ENCODE measurements at regions of chr6 and their contacts with region 1.

Region 1: DNA sequence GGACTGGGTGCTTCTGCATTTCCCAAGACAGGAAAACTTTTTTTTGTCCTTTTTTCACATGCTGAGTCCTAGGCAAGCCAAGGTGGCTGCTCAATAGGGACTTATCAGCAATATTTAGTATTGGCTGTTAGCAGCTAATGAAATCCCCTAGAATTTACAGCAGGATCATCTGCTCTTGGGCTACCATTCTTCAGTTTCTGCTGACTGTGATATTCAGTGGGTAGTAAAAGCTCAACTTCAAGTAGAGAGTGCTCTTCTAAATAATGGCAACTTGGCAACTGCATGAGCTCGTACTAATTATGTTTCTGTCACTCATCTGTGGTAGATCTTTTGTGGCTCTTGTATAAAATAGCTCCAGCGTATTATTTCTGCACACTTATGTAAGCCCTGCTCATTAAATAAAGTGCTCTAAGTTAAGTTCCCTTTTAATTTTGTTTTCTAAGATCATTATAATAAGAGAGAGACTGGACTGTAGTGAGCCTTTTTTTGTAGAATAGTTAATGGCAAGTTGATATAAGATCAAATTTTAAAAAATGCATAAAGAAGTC is 110.3 kb downstream of the SLC35F1 start:
- DNase-seq: no peak
- H3K4me3 Mint-ChIP-seq: no peak overlapping the region
- H3K27ac Mint-ChIP-seq: no peak overlapping the region
- H3K4me1 Mint-ChIP-seq: no peaks in the 10 kb centered on the region
- H3K27me3 Mint-ChIP-seq: peaks cover 31% of the 10 kb centered on the region
- CTCF ChIP-seq: no peak

Region 2: GRCh38 chr6:117280922-117281321 is 736.5 kb before region 1 on chr6:
- CTCF ChIA-PET with region 1: no interaction called
- POLR2A ChIA-PET with region 1: interaction called, 10 read pairs
- intact Hi-C with region 1: no loop called
- DNase-seq: peak; percentile 54
- H3K4me3 Mint-ChIP-seq: no peak overlapping the region
- H3K27ac Mint-ChIP-seq: no peak overlapping the region
- H3K4me1 Mint-ChIP-seq: no peaks in the 10 kb centered on the region
- H3K27me3 Mint-ChIP-seq: peaks cover 13% of the 10 kb centered on the region
- CTCF ChIP-seq: peak; percentile 13

Region 3: GRCh38 chr6:117498159-117498558 is 519.2 kb before region 1 on chr6:
- CTCF ChIA-PET with region 1: no interaction called
- POLR2A ChIA-PET with region 1: no interaction called
- intact Hi-C with region 1: no loop called
- DNase-seq: peak; percentile 80
- H3K4me3 Mint-ChIP-seq: peak overlapping the region; percentile 57
- H3K27ac Mint-ChIP-seq: peak overlapping the region; percentile 98
- H3K4me1 Mint-ChIP-seq: peaks cover 60% of the 10 kb centered on the region
- H3K27me3 Mint-ChIP-seq: no peaks in the 10 kb centered on the region
- CTCF ChIP-seq: no peak

Region 4: GRCh38 chr6:118042855-118043254 is 25.5 kb after region 1 on chr6:
- CTCF ChIA-PET with region 1: no interaction called
- POLR2A ChIA-PET with region 1: no interaction called
- intact Hi-C with region 1: no loop called
- DNase-seq: no peak
- H3K4me3 Mint-ChIP-seq: no peak overlapping the region
- H3K27ac Mint-ChIP-seq: no peak overlapping the region
- H3K4me1 Mint-ChIP-seq: no peaks in the 10 kb centered on the region
- H3K27me3 Mint-ChIP-seq: peaks cover 13% of the 10 kb centered on the region
- CTCF ChIP-seq: no peak